ENCODE measurements at regions of chr3 and their contacts with region 1.

Region 1: GRCh38 chr3:49539659-49540560 is 14.4 kb upstream of the BSN start:
- DNase-seq: peak; percentile 54
- H3K4me3 ChIP-seq: peak overlapping the region; percentile 40 to 65 (median 50)
- H3K27ac ChIP-seq: peak overlapping the region; percentile 60 to 84 (median 78)
- H3K4me1 ChIP-seq: peaks cover 5 to 18% (median 6%) of the 10 kb centered on the region in 3 donors
- H3K27me3 ChIP-seq: peaks cover 0 to 8% (median 0%) of the 10 kb centered on the region in 4 donors
- CTCF ChIP-seq: peak; percentile 88 to 96 (median 92)
- POLR2A ChIP-seq: no peak

Region 2: DNA sequence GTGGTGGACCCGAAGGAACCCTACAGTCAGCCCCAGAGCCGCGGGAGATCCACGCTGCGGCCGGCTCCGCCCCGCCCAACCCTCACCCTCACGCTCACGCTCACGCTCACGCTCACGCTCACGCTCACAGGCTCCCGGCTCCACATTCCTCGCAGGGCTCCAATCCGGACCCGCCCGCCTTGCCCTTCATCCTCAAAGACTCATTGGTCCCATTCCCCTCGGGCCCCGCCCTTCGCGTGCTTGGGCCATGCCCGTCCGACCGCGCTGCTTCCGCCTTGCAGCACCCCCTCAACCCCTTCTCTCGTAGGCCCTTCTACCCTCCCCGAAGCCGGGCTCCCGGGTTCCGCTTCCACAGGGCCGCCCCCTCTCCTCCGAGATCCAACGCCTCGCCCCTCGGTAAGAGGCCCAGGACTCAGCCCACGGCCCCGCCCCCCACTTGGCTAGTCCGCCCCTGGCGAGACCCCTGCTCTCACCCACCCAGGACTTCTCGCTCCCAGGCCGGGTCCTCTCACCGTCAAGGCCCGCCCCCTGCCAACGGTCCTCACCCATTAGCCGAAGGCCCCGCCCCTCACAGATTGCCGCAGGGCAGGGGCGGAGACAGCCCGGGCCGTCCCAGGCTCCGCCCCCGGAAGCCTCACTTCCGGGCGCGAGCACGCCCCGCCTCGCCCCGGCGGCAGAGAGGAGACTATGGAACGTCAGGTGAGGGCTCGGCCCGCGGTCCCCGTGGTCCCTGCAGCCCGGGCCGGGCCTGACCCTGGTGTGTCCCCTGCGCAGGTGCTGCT is 134.0 kb after region 1 on chr3 and contains the start of gene APEH:
- intact Hi-C with region 1: loop called (anchors 5 kb)
- DNase-seq: no peak
- H3K4me3 ChIP-seq: peak within 1 kb of the TSS; percentile 66 to 93 (median 85)
- H3K27ac ChIP-seq: peak within 1 kb of the TSS; percentile 83 to 97 (median 97)
- H3K4me1 ChIP-seq: peaks cover 14 to 36% (median 19%) of the 10 kb centered on the region in 3 donors
- H3K27me3 ChIP-seq: no peaks in the 10 kb centered on the region
- CTCF ChIP-seq: peak in 1 of 6 experiments; percentile 14
- POLR2A ChIP-seq: peak in 3 of 4 donors; percentile 67 to 79 (median 69)
- total RNA-seq, gene APEH: 60.7 to 102 (median 89.4) TPM

Measured in esophagus squamous epithelium (tissue), 5 donors.